ENCODE measurements at regions of chr17 and their contacts with region 1.

Region 1: DNA sequence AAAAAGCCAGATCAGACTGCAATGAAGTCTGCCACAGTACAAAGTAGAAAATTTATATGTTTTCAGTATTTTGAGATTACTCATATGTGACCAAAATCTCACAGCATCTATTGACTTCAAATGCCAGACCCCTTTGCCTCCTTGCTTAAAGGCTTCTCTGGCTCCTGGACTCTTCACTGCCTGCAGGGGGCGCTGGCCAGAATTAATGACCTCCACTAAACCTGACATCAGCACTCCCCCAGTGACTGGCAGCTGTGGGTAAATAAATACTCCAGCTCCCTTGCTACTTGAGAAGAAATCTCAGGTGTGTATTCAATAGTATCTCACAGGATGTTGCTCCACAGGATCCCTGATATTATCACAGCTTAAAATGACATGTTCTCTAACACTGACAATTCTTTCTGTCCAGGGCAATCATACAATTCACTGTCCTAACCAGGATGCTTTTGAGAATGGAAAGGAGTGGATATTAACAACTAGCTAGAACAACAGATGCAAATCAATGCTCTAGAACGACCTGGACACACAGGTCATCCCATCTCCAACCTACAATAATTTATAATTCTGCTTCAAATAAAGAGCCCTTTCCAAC is 4.0 kb downstream of the BECN1 start:
- DNase-seq: peak; percentile 65
- ATAC-seq: no peak

Region 2: DNA sequence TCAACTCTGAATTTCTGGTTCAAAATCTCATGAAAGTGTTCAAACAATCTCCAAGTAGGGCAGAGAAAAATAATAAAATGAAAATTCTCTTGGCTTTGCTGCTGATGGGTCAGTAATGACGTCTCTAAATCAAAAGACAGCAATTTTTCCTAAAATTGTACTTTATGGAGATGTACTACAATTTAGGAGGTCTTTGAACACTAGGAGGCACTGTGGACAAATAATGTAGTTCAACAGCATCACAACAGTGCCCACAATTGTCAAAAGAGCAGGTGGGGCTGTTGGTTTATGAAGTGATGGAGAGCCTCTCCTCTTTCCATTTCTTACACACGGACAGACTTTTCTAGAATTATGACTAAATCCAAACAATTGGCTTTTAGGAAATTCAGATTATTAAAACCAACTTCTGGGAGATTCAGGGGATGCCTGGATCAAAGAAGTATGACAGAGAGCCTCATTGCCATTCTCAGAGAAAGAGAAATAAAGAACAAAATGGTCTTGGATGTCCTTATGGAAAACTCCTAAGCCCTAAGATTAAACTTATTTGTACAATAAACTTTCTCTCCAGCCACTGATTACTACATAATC is 99.0 kb before region 1 on chr17:
- intact Hi-C with region 1: loop called (anchors 10 kb)
- DNase-seq: no peak
- ATAC-seq: peak; percentile 73